ENCODE measurements at regions of chr13 and their contacts with region 1.

Region 1: GRCh38 chr13:36571444-36571843 is 102.4 kb upstream of the SERTM1 start:
- DNase-seq: no peak
- H3K4me3 ChIP-seq: no peak overlapping the region
- H3K27ac ChIP-seq: no peak overlapping the region
- H3K4me1 ChIP-seq: no peaks in the 10 kb centered on the region
- H3K27me3 ChIP-seq: no peaks in the 10 kb centered on the region
- CTCF ChIP-seq: no peak

Region 2: DNA sequence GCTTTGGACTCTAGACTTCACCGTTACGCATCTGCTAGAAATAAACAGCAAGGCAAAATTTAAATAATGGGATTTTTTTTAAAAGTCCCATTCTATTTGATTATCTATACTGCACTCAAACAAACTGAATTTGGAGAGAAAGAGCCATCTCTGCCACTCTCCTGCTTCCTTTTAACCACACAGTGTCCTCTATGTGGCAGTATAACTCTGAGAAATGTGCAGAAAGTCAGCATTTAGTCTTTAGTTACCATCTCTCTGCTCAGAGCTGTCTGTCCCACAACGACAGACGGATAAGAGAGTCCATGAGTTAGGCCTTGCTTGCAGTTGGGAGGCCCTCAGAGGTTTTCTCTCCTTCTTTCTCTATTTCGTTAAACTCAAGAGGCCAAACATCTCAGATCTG is 117.9 kb before region 1 on chr13:
- CTCF ChIA-PET with region 1: no interaction called
- POLR2A ChIA-PET with region 1: no interaction called
- intact Hi-C with region 1: no loop called
- DNase-seq: no peak
- H3K4me3 ChIP-seq: no peak overlapping the region
- H3K27ac ChIP-seq: no peak overlapping the region
- H3K4me1 ChIP-seq: no peaks in the 10 kb centered on the region; the same call in 1 of the 2 replicates
- H3K27me3 ChIP-seq: no peaks in the 10 kb centered on the region
- CTCF ChIP-seq: 0 out of 2 replicates have a peak, but pooled peaks have one; percentile 29

Region 3: GRCh38 chr13:36712770-36713169 is 141.3 kb after region 1 on chr13:
- CTCF ChIA-PET with region 1: no interaction called
- POLR2A ChIA-PET with region 1: no interaction called
- intact Hi-C with region 1: loop called (anchors 10 kb)
- DNase-seq: no peak
- H3K4me3 ChIP-seq: no peak overlapping the region
- H3K27ac ChIP-seq: no peak overlapping the region
- H3K4me1 ChIP-seq: no peaks in the 10 kb centered on the region
- H3K27me3 ChIP-seq: no peaks in the 10 kb centered on the region
- CTCF ChIP-seq: no peak

Region 4: DNA sequence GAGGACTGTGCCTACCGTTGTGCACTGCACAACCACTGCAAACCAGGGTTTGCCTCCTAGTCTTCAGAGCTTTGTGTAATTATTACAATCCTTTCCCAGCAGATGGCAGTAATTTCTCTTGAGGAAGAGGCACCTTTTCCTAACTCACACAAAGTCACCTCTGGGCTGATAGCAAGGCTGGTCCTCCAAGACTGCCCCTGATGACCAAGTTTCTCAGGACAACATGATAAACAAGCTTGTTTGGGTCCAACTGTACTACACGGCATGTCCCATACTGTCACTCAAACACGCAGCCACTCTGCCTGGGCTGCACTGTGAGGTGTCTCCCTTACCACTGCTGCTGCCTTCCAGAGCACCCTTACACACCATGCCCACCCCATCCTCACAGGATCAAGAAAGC is 286.8 kb after region 1 on chr13:
- CTCF ChIA-PET with region 1: no interaction called
- POLR2A ChIA-PET with region 1: no interaction called
- intact Hi-C with region 1: no loop called
- DNase-seq: peak in 1 of 2 experiments; percentile 45
- H3K4me3 ChIP-seq: no peak overlapping the region
- H3K27ac ChIP-seq: no peak overlapping the region
- H3K4me1 ChIP-seq: peaks cover 9% of the 10 kb centered on the region
- H3K27me3 ChIP-seq: no peaks in the 10 kb centered on the region
- CTCF ChIP-seq: peak; percentile 65

Measured in PC-9 (cell line).